CD4-positive, alpha-beta T cell (primary cell): ENCODE measurements at regions of chr4 and their contacts with region 1.

Region 1: GRCh38 chr4:15729910-15730533 is 27.2 kb downstream of the BST1 start:
- DNase-seq: peak in 9 of 14 experiments; percentile 7 to 71 (median 12)
- ATAC-seq: peak; percentile 66
- H3K4me3 ChIP-seq: no peak overlapping the region
- H3K4me3 Mint-ChIP-seq: no peak overlapping the region
- H3K27ac ChIP-seq: no peak overlapping the region
- H3K27ac Mint-ChIP-seq: no peak overlapping the region
- H3K4me1 ChIP-seq: peaks cover 3% of the 10 kb centered on the region
- H3K4me1 Mint-ChIP-seq: peaks cover 14% of the 10 kb centered on the region
- H3K27me3 ChIP-seq: no peaks in the 10 kb centered on the region
- H3K27me3 Mint-ChIP-seq: no peaks in the 10 kb centered on the region
- CTCF ChIP-seq: peak; percentile 95

Region 2: DNA sequence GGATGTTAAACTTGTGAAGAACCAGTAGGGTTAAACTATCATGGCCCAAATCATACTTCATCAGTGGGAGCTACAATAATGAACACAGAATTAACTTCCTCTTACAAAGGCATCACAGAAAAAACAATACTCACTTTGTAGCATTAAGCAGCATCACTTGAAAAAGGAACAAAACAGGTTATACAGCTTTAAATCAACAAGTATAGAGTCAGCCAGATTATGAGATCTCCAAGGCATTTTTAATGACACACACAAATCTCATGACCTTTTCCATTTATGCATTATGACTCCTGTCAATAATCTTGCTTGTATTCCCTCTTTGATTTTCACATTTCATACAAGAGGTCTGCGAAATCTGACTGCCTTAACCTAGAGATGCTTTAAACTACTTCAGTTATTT is 93.2 kb before region 1 on chr4:
- CTCF ChIA-PET with region 1: no interaction called
- POLR2A ChIA-PET with region 1: no interaction called
- intact Hi-C with region 1: no loop called
- DNase-seq: no peak
- ATAC-seq: no peak
- H3K4me3 ChIP-seq: no peak overlapping the region
- H3K4me3 Mint-ChIP-seq: no peak overlapping the region
- H3K27ac ChIP-seq: no peak overlapping the region
- H3K27ac Mint-ChIP-seq: no peak overlapping the region
- H3K4me1 ChIP-seq: no peaks in the 10 kb centered on the region
- H3K4me1 Mint-ChIP-seq: peaks cover 10% of the 10 kb centered on the region
- H3K27me3 ChIP-seq: no peaks in the 10 kb centered on the region
- H3K27me3 Mint-ChIP-seq: no peaks in the 10 kb centered on the region
- CTCF ChIP-seq: no peak

Region 3: GRCh38 chr4:15778289-15779241 is 48.5 kb after region 1 on chr4 and contains the start of gene CD38:
- CTCF ChIA-PET with region 1: no interaction called
- POLR2A ChIA-PET with region 1: no interaction called
- intact Hi-C with region 1: loop called (anchors 2 to 5 kb)
- DNase-seq: peak in 12 of 14 experiments; percentile 15 to 67 (median 40)
- ATAC-seq: peak; percentile 62
- H3K4me3 ChIP-seq: peak within 1 kb of the TSS; percentile 63
- H3K4me3 Mint-ChIP-seq: peak within 1 kb of the TSS; percentile 89
- H3K27ac ChIP-seq: peak within 1 kb of the TSS in 1 of 2 donors; percentile 24
- H3K27ac Mint-ChIP-seq: peak within 1 kb of the TSS; percentile 83
- H3K4me1 ChIP-seq: peaks cover 30% of the 10 kb centered on the region
- H3K4me1 Mint-ChIP-seq: peaks cover 77% of the 10 kb centered on the region
- H3K27me3 ChIP-seq: peaks cover 0 to 2% of the 10 kb centered on the region in 2 experiments
- H3K27me3 Mint-ChIP-seq: no peaks in the 10 kb centered on the region
- CTCF ChIP-seq: no peak
- total RNA-seq, gene CD38: 9.6 to 9.9 TPM

Region 4: DNA sequence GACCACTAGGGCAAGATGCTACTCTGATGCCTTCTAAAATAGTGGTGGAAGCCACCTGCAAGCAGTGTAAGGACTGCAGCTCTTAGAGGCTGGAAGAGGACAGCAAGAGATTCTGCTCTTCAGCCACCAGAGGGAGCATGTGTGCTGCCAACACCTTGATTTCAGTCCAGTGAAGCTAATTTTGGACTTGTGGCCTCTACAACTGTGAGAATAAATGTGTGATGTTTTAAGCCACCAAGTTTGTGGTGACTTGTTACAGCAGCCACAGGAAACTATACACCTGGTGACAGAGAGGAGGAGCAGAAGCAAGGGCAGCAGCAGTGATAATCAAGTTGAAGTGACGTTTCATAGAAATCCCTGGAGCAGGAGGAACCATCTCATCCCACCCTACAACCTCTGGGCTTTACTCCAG is 152.7 kb after region 1 on chr4:
- CTCF ChIA-PET with region 1: no interaction called
- POLR2A ChIA-PET with region 1: no interaction called
- intact Hi-C with region 1: loop called (anchors 1 to 2 kb)
- DNase-seq: peak in 13 of 14 experiments; percentile 11 to 75 (median 22)
- ATAC-seq: peak; percentile 64
- H3K4me3 ChIP-seq: no peak overlapping the region
- H3K4me3 Mint-ChIP-seq: no peak overlapping the region
- H3K27ac ChIP-seq: no peak overlapping the region
- H3K27ac Mint-ChIP-seq: no peak overlapping the region
- H3K4me1 ChIP-seq: no peaks in the 10 kb centered on the region
- H3K4me1 Mint-ChIP-seq: no peaks in the 10 kb centered on the region
- H3K27me3 ChIP-seq: no peaks in the 10 kb centered on the region
- H3K27me3 Mint-ChIP-seq: peaks cover 4% of the 10 kb centered on the region
- CTCF ChIP-seq: peak; percentile 76

Region 5: GRCh38 chr4:15982842-15983524 is 253.0 kb after region 1 on chr4:
- CTCF ChIA-PET with region 1: no interaction called
- POLR2A ChIA-PET with region 1: no interaction called
- intact Hi-C with region 1: no loop called
- DNase-seq: no peak
- ATAC-seq: no peak
- H3K4me3 ChIP-seq: no peak overlapping the region
- H3K4me3 Mint-ChIP-seq: no peak overlapping the region
- H3K27ac ChIP-seq: no peak overlapping the region
- H3K27ac Mint-ChIP-seq: no peak overlapping the region
- H3K4me1 ChIP-seq: no peaks in the 10 kb centered on the region
- H3K4me1 Mint-ChIP-seq: no peaks in the 10 kb centered on the region
- H3K27me3 ChIP-seq: peaks cover 0 to 4% of the 10 kb centered on the region in 2 experiments
- H3K27me3 Mint-ChIP-seq: peaks cover 5% of the 10 kb centered on the region
- CTCF ChIP-seq: no peak